ENCODE measurements at regions of chr17 and their contacts with region 1.

Region 1: DNA sequence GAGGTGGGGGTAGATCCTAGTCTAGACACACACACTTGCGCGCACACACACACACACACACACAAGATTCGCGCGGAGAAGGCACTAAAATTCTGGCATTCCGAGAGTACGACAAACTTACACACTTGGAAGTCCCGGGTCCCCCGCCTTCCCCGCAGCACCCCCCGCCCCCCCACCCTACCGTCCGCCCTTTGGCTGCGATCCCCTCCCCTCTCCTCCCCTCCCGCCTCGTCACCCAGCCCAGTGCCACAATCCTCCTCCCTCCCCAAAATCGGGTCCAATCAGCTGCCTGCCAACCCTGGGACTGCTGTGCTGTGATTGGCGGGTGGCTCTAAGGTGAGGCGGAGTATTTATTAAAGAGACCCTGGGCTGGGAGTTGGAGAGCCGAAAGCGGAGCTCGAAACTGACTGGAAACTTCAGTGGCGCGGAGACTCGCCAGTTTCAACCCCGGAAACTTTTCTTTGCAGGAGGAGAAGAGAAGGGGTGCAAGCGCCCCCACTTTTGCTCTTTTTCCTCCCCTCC is at the start of gene SOX9:
- DNase-seq: peak; percentile 82 to 94
- ATAC-seq: peak; percentile 74
- total RNA-seq, gene SOX9: 41.1 to 49.7 TPM

Region 2: GRCh38 chr17:71472809-71473789 is 647.6 kb before region 1 on chr17:
- intact Hi-C with region 1: loop called in 1 of 2 experiments (anchors 5 kb)
- DNase-seq: no peak
- ATAC-seq: peak; percentile 93

Region 3: DNA sequence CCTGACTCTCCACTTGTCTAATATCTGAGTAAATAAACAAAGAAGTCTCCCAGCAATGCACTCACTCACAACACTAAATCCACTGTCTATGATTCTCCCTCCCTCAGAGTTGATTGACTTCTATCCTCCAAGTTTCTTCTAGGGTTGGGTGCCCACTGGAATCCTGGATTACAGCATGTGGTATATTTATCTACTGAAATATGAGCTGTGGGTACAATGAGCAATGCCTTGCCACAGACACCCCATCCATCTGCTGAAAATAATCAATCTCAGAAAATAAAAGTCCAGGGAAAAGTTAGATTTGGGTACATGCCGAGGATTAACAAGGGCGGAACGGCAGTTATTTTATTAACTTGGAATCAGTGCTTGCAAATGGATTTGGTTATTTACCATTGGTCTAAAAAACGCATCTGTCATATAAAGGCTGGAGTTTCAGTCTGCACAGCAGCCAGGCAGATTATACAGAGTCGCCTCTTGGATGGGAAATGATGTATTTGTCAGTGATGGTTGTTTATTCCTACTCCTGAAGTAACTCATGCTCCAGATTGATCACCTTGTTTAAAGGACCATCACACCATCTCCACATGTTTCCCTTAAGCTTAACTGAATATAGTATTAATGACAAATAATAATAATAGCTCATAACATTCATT is 193.8 kb before region 1 on chr17:
- intact Hi-C with region 1: no loop called
- DNase-seq: no peak
- ATAC-seq: no peak

Region 4: DNA sequence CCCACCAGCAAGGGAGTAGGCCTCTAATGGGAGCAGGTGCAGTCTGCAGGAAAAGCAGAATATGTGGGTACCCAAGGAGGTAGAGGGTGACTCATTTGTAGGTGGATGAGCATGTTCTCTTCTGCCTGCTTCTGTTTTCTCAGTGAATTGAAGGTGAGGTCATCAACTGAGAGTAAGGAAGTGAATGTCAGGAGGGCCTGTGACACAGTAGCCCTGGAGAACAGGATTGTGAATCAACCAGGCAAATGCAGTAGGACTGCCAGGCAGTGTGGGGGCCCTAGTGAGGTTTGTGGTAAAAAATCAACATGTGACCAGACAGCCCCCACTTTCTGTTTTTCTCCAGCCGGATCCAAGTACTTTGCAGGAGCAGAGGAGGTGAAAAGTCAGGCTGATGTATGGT is 150.4 kb before region 1 on chr17:
- intact Hi-C with region 1: no loop called
- DNase-seq: no peak
- ATAC-seq: peak; percentile 52

Region 5: DNA sequence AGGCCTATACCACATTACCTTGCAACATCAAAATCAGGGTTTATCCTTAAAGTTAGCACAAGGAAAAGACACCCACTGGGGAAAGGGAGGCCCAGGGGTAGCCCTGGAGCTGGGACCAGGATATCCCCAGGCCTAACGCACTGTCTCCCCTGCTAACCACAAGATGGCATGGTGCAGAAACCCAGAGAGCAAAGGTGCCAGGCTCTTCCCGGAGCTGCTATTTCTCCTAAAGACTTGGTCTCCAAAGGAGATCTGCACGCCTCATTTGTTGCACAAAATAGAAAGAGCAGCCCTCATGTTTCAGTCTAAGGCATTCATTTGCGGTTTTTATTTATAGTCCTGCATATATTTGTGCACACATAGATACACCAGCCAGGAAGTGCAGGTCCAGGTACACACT is 408.7 kb after region 1 on chr17:
- intact Hi-C with region 1: loop called in 1 of 2 experiments (anchors 10 kb)
- DNase-seq: no peak
- ATAC-seq: peak; percentile 10